Right cardiac atrium (tissue), 5 donors: ENCODE measurements at regions of chr16 and their contacts with region 1.

Region 1: DNA sequence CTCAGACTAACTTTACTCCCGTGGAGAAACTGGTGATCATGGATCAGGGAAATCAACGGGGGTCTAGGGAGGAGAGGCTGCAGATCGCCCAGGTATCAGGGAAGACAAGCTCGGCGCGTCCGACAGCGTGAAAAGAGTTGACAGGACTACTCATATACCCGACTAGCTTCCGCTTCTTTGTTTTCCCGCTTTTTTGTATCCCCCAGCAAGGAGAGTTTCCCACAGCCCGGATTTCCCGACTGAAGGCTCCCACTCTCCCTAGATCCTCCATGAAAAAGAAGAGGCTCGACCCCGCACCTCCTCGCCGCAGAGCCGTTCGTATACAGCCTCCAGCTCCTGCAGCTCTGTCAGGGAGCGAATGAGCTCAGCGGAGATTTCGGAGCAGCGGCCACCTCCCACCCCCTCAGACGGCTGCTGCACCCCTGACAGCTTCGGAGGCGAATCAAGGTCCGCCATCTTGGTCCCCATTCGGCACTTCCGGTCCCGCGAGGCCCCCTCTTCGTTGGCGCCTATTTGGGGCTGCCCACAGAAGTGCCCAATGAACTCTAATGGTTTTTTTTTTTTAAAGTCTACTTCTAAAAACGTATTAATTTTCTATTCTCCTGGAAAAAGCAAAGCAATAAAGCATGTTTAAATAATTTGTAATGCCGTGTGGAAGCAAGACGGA is at the start of gene COG4:
- DNase-seq: peak; percentile 88 to 95 (median 94)
- ATAC-seq: peak; percentile 91 to 94
- H3K4me3 ChIP-seq: peak within 1 kb of the TSS; percentile 95
- H3K27ac ChIP-seq: peak within 1 kb of the TSS; percentile 85
- H3K4me1 ChIP-seq: peaks cover 5% of the 10 kb centered on the region
- H3K27me3 ChIP-seq: no peaks in the 10 kb centered on the region
- total RNA-seq, gene COG4: 30.7 to 40.8 (median 37.3) TPM

Region 2: DNA sequence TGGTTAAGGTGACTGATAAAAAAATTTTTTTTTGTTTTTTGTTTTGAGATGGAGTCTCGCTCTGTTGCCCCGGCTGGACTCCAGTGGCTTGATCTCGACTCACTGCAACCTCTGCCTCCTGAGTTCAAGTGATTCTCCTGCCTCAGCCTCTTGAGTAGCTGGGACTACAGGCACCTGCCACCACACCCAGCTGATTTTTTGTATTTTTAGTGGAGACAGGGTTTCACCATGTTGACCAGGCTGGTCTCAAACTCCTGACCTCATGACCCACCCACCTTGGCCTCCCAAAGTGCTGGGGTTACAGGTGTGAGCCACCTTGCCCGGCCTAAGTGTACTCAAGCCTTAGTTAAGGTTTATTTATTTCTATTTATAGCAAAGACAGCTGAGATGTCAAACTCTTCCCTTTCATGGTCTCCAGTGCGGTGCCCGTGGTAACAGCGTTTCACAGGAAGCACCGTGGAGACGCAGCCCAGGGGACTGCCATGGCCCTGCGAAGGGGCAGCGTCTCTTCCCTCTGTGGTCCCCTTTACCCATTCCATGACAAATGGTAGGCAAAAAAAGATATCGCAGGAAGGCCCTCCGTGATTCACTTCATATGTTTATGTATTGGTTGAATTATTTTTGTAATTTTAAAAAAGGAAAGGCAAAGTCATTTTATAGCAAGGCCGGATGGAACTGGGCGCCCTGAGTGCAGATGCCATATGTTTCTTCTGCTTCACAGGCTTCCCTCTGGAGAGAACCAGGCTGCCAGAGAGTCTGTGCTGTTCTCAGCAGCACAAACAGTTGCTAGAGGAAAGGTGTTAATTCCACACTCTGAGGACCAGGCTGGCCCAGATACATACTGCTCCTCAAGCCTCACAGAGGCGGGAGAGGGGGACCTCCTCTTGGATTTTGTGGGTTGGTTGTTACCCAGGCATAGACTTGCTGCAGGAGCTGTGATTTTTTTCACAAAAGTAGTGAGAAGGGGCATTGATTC is 147.3 kb before region 1 on chr16:
- intact Hi-C with region 1: loop called in 1 of 4 experiments (anchors 10 kb)
- DNase-seq: peak in 1 of 3 donors; percentile 37
- ATAC-seq: no peak
- H3K4me3 ChIP-seq: no peak overlapping the region
- H3K27ac ChIP-seq: no peak overlapping the region
- H3K4me1 ChIP-seq: no peaks in the 10 kb centered on the region
- H3K27me3 ChIP-seq: no peaks in the 10 kb centered on the region